Uterus (tissue), 4 donors: ENCODE measurements at regions of chr5 and their contacts with region 1.

Region 1: DNA sequence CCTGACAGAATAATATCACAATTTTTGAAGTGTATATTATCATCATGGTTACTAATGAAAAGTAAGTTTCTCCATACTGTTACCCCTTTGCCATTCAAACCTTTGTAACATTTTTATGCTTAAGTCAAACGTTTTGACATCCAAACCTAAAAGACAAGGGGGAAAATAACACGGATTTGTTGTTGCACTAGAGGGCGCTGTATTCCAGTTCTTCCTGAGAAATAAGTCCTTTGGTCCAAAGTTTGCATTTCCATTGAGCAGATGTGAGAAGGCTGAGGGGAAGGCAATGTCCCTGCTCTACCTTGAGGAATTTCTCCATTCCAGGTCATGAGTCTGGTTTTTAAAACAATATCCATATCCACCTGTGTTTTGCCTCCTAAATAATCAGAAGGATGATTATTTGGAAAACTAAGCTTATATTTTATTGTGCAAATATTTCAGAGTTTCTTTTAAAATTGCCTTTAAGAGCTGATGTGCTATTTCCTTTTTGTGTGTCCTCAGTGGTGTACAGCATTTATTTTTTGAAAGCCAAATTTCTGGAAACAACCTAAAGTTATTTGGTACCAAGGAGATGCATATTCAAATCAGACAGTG is 9.7 kb downstream of the LECT2 start:
- DNase-seq: peak; percentile 30 to 71
- H3K4me3 ChIP-seq: no peak overlapping the region
- H3K27ac ChIP-seq: no peak overlapping the region
- H3K4me1 ChIP-seq: no peaks in the 10 kb centered on the region
- H3K27me3 ChIP-seq: no peaks in the 10 kb centered on the region
- CTCF ChIP-seq: peak; percentile 80 to 85 (median 83)
- POLR2A ChIP-seq: no peak

Region 2: GRCh38 chr5:136080483-136081216 is 135.6 kb after region 1 on chr5:
- intact Hi-C with region 1: loop called (anchors 5 kb)
- DNase-seq: peak; percentile 85 to 86
- H3K4me3 ChIP-seq: peak overlapping the region in 1 of 2 donors; percentile 34
- H3K27ac ChIP-seq: peak overlapping the region; percentile 76 to 79
- H3K4me1 ChIP-seq: no peaks in the 10 kb centered on the region
- H3K27me3 ChIP-seq: no peaks in the 10 kb centered on the region
- CTCF ChIP-seq: no peak
- POLR2A ChIP-seq: peak; percentile 36 to 69

Region 3: DNA sequence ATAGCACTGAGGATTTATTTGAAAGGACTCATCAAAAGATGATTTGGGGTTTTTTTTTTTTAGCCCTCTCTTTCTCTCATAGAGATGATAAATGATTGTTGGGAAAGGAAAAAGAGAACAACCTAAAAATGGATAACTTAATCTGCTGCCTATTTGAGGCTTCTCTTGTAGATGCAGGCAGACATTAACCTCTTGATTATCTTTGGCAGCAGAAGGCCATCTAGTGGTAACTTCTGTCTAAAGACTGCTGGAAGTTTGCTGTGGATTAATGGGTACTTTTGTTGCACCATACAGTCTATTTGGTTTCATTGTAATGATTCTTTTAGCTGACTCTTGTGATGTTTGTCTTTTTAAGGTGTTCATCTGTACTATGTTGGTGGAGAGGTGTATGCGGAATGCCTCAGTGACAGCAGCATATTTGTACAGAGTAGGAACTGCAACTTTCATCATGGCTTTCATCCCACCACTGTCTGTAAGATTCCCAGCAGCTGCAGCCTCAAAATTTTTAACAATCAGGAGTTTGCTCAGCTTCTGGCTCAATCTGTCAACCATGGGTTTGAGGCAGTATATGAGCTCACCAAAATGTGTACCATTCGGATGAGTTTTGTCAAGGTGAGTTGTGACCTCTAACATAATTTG is 229.1 kb after region 1 on chr5:
- intact Hi-C with region 1: loop called (anchors 5 kb)
- DNase-seq: no peak
- H3K4me3 ChIP-seq: no peak overlapping the region
- H3K27ac ChIP-seq: no peak overlapping the region
- H3K4me1 ChIP-seq: no peaks in the 10 kb centered on the region
- H3K27me3 ChIP-seq: no peaks in the 10 kb centered on the region
- CTCF ChIP-seq: peak in 3 of 4 experiments; percentile 41 to 64 (median 46)
- POLR2A ChIP-seq: no peak

Region 4: GRCh38 chr5:136212252-136212721 is 267.2 kb after region 1 on chr5:
- intact Hi-C with region 1: loop called (anchors 10 kb)
- DNase-seq: peak; percentile 30 to 44
- H3K4me3 ChIP-seq: no peak overlapping the region
- H3K27ac ChIP-seq: no peak overlapping the region
- H3K4me1 ChIP-seq: no peaks in the 10 kb centered on the region
- H3K27me3 ChIP-seq: no peaks in the 10 kb centered on the region
- CTCF ChIP-seq: peak; percentile 67 to 80 (median 78)
- POLR2A ChIP-seq: no peak

Region 5: DNA sequence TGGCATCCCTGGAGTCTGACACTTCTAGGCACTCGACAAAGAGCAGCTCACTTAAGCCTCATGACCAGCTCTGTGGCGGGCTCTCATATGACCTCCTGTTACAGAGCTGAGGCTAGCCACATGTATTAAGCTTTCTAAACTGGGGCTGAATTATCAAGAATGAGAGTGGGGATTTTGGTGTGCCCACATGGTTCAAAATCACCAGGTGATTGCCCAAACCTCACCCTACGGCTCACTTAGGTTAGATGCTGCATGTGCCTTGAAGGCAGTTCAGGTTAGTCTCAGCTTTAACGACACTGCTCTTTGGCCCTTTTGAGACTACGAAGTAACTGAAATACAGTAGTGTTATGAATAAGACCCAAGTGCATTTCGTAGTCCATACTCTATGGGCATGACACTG is 287.3 kb after region 1 on chr5:
- intact Hi-C with region 1: no loop called
- DNase-seq: no peak
- H3K4me3 ChIP-seq: no peak overlapping the region
- H3K27ac ChIP-seq: no peak overlapping the region
- H3K4me1 ChIP-seq: no peaks in the 10 kb centered on the region
- H3K27me3 ChIP-seq: no peaks in the 10 kb centered on the region
- CTCF ChIP-seq: no peak
- POLR2A ChIP-seq: no peak